PC-9 (cell line): ENCODE measurements at regions of chr2 and their contacts with region 1.

Region 1: GRCh38 chr2:203021991-203022390 is 7.3 kb downstream of the NBEAL1 start:
- DNase-seq: no peak
- H3K4me3 ChIP-seq: no peak overlapping the region
- H3K27ac ChIP-seq: no peak overlapping the region
- H3K4me1 ChIP-seq: peaks cover 3% of the 10 kb centered on the region
- H3K27me3 ChIP-seq: no peaks in the 10 kb centered on the region
- CTCF ChIP-seq: no peak

Region 2: DNA sequence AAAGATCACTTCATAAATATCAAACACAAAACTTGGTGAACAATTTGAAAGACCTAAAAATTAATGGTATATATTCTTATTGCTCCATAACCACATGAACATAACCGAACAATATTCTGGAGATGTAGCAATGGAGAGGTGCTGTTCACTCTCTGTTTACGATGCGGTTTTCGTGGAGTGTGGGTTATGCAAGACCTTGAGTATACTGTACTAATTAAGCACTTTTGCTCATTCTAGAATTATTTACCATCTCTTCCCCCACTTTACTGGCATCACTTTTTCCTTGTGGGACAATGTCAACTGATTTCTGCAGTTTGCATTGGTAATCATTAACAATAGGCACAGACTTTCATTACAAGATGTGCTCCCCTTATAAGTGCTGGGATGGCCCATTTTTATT is 415.5 kb after region 1 on chr2:
- CTCF ChIA-PET with region 1: interaction called, 16 read pairs
- POLR2A ChIA-PET with region 1: no interaction called
- intact Hi-C with region 1: no loop called
- DNase-seq: no peak
- H3K4me3 ChIP-seq: no peak overlapping the region
- H3K27ac ChIP-seq: no peak overlapping the region
- H3K4me1 ChIP-seq: no peaks in the 10 kb centered on the region
- H3K27me3 ChIP-seq: no peaks in the 10 kb centered on the region
- CTCF ChIP-seq: no peak